Body of pancreas (tissue), 4 donors: ENCODE measurements at regions of chr18 and their contacts with region 1.

Region 1: GRCh38 chr18:57881818-57882413 is 78.8 kb upstream of the ATP8B1 start:
- DNase-seq: peak; percentile 73 to 77 (median 76)
- ATAC-seq: peak; percentile 96
- H3K4me3 ChIP-seq: no peak overlapping the region
- H3K27ac ChIP-seq: no peak overlapping the region
- H3K4me1 ChIP-seq: no peaks in the 10 kb centered on the region
- H3K27me3 ChIP-seq: no peaks in the 10 kb centered on the region
- CTCF ChIP-seq: peak; percentile 82 to 92 (median 90)
- POLR2A ChIP-seq: no peak

Region 2: GRCh38 chr18:58038063-58038462 is 156.1 kb after region 1 on chr18:
- intact Hi-C with region 1: loop called (anchors 10 kb)
- DNase-seq: no peak
- ATAC-seq: no peak
- H3K4me3 ChIP-seq: no peak overlapping the region
- H3K27ac ChIP-seq: no peak overlapping the region
- H3K4me1 ChIP-seq: no peaks in the 10 kb centered on the region
- H3K27me3 ChIP-seq: no peaks in the 10 kb centered on the region
- CTCF ChIP-seq: no peak
- POLR2A ChIP-seq: no peak

Region 3: DNA sequence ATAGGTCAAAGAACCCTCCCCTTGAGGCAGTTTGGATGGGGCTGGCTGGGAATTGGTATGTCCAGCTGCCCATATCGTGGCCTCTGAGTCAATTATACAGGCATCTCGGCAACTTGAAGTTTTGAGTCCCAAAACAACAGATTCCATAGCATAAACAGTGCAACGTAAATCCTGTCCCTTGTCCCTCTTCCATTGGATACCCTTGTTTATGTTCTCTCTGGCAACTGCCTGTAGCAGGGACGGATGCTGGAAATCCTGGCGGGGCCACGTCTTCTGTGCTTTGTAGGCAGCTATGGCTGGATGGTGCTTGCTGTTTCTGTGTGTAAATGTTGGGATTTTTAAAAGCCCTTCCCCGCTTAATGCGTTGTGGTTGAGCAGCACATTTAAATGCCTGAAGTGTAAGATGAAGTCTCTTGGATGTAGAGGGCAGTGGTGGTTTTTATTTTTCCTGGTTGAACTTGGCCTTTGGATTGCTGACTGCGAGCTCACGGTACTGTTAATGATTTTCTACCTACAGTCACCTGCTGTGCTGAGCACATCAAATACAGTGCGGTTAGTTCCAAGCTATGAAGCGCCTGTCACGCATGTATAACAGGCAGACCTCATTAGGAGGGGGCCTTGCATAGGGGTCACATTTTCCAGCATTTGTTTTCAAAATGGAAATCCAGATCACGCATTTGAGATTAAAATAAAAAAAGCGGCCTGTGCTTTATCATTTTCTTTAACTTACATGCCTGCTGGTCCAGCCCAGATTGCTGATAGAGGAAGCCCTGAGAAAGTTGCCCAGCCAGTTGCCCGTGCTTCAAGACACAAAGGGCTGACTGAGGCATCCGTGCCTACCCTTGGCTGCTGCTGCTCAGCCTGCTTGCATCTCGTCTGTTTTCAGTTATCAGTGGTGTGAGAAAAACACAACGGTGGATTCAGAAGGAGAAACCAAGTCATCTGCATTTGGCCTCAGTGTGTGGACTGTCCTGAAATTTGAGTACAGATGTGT is 246.8 kb after region 1 on chr18:
- intact Hi-C with region 1: loop called (anchors 10 kb)
- DNase-seq: peak; percentile 36 to 70 (median 56)
- ATAC-seq: peak; percentile 89
- H3K4me3 ChIP-seq: no peak overlapping the region
- H3K27ac ChIP-seq: peak overlapping the region in 3 of 4 donors; percentile 53 to 69 (median 59)
- H3K4me1 ChIP-seq: peaks cover 22% of the 10 kb centered on the region
- H3K27me3 ChIP-seq: no peaks in the 10 kb centered on the region
- CTCF ChIP-seq: peak in 3 of 7 experiments; percentile 17 to 43 (median 32)
- POLR2A ChIP-seq: no peak